Activated CD4-positive, alpha-beta T cell treated with anti-CD3 and anti-CD28 coated beads for 36 hours (primary cell): ENCODE measurements at regions of chr3 and their contacts with region 1.

Region 1: GRCh38 chr3:142963516-142964448 is at the start of gene PAQR9:
- DNase-seq: peak; percentile 48
- ATAC-seq: peak; percentile 55
- H3K4me3 Mint-ChIP-seq: peak within 1 kb of the TSS; percentile 67
- H3K27ac Mint-ChIP-seq: no peak within 1 kb of the TSS
- H3K4me1 Mint-ChIP-seq: peaks cover 7% of the 10 kb centered on the region
- H3K27me3 Mint-ChIP-seq: peaks cover 49% of the 10 kb centered on the region
- total RNA-seq, gene PAQR9: not detected

Region 2: DNA sequence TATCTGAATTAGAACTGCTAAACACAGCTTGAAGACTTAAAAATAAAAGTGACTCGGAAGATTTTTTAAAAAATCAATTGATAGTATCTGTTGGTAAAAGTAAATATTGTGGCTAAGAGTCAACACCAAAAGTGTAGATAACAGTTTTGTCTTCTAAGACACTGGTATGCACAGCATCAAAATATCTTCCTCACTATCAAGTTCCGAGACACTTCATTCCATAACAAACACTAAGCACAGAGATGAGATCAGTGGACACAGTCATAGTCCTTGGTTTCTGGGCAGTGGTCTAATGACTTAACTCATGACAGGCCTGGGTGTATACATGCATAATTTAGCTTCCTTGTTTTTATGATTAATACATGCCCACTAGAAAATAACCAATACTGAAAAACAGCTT is 1668.9 kb before region 1 on chr3:
- CTCF ChIA-PET with region 1: no interaction called
- POLR2A ChIA-PET with region 1: no interaction called
- intact Hi-C with region 1: no loop called
- DNase-seq: no peak
- ATAC-seq: peak; percentile 97
- H3K4me3 Mint-ChIP-seq: peak overlapping the region; percentile 52
- H3K27ac Mint-ChIP-seq: peak overlapping the region; percentile 74
- H3K4me1 Mint-ChIP-seq: peaks cover 16% of the 10 kb centered on the region
- H3K27me3 Mint-ChIP-seq: no peaks in the 10 kb centered on the region

Region 3: GRCh38 chr3:142787719-142788118 is 176.1 kb before region 1 on chr3:
- CTCF ChIA-PET with region 1: no interaction called
- POLR2A ChIA-PET with region 1: no interaction called
- intact Hi-C with region 1: no loop called
- DNase-seq: no peak
- ATAC-seq: no peak
- H3K4me3 Mint-ChIP-seq: no peak overlapping the region
- H3K27ac Mint-ChIP-seq: no peak overlapping the region
- H3K4me1 Mint-ChIP-seq: no peaks in the 10 kb centered on the region
- H3K27me3 Mint-ChIP-seq: no peaks in the 10 kb centered on the region

Region 4: DNA sequence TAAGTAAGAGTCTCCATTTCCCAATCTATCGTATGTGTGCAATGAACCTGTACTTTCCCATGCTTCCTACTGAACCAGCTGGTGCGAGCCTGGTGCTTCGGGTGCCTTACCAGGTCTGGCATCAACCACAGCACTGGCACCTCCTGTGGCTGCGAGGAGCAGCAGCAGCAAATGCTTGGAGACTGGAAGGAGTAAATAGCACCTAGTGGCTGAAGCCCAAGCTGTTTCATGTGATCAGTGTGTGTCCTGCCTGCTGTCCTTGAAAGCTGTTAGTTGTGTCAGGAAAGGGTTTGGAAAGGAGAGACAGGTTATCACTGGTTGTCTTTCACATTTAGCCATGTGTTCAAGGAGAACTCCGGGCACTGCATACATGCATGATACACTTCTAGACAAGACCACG is 106.7 kb before region 1 on chr3:
- CTCF ChIA-PET with region 1: no interaction called
- POLR2A ChIA-PET with region 1: no interaction called
- intact Hi-C with region 1: no loop called
- DNase-seq: no peak
- ATAC-seq: no peak
- H3K4me3 Mint-ChIP-seq: no peak overlapping the region
- H3K27ac Mint-ChIP-seq: no peak overlapping the region
- H3K4me1 Mint-ChIP-seq: no peaks in the 10 kb centered on the region
- H3K27me3 Mint-ChIP-seq: peaks cover 15% of the 10 kb centered on the region

Region 5: DNA sequence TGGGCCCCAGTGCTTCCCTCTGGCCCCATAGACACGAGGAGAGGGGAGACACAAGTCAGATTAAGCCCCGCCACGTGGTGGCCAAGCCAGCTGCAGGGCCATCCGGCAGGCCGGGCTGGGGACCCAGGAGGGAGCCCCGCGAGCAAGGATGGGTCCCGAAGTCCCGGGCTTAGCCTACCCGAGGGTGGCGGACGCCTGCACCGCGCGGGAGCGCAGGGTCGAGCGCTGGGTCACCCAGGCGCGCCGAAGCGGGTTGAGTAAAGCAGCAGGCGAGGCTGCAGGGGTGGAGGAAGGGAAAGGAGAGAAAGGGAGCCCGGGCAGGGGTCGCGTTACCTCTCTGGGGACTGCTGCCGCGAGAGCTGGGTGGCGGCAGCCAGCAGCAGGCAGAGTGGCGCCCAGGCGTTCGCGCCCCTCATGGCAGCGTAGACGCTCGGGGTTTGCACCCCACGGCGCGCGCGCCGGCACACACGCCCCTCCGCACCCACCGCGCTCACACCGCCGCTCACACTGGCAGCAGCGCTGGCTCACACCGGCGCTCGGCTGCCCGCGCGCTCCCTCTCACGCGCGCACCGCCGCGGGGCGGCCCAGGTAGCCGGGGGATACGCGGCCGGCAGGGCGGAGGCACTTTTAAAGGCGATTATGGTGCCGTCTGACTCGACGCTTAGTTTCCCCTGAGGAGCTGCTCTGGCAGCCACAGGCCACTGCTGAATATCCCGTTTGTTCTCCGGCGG is 75.1 kb before region 1 on chr3 and contains the start of gene PCOLCE2:
- CTCF ChIA-PET with region 1: no interaction called
- POLR2A ChIA-PET with region 1: no interaction called
- intact Hi-C with region 1: loop called in 1 of 2 experiments (anchors 2 kb)
- DNase-seq: peak; percentile 41
- ATAC-seq: peak; percentile 78
- H3K4me3 Mint-ChIP-seq: peak within 1 kb of the TSS; percentile 57
- H3K27ac Mint-ChIP-seq: no peak within 1 kb of the TSS
- H3K4me1 Mint-ChIP-seq: peaks cover 7% of the 10 kb centered on the region
- H3K27me3 Mint-ChIP-seq: peaks cover 40% of the 10 kb centered on the region
- total RNA-seq, gene PCOLCE2: 0.39 to 0.55 TPM

Region 6: DNA sequence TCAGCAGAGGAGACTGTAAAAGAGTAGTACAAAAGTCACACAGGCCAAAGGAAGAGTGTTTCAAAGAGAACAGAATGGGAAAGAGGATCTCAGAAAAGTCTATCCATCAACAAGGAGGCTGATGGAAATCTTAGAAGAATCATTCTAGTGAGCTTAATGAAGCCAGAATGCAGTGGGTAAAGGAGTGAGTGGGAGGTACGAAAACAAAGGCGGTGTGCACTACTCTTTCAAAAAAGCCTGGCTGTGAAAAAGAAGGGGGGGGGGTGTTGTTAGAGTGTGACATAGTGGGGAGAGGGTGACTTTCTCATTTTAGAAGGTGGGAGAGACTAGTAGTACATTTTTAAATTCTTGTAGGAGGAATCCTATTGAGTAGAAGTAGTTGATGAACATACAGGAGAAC is 12.0 kb before region 1 on chr3:
- CTCF ChIA-PET with region 1: interaction called, 7 read pairs
- POLR2A ChIA-PET with region 1: interaction called, 10 read pairs
- intact Hi-C with region 1: no loop called
- DNase-seq: no peak
- ATAC-seq: no peak
- H3K4me3 Mint-ChIP-seq: no peak overlapping the region
- H3K27ac Mint-ChIP-seq: no peak overlapping the region
- H3K4me1 Mint-ChIP-seq: peaks cover 8% of the 10 kb centered on the region
- H3K27me3 Mint-ChIP-seq: peaks cover 31% of the 10 kb centered on the region

Region 7: DNA sequence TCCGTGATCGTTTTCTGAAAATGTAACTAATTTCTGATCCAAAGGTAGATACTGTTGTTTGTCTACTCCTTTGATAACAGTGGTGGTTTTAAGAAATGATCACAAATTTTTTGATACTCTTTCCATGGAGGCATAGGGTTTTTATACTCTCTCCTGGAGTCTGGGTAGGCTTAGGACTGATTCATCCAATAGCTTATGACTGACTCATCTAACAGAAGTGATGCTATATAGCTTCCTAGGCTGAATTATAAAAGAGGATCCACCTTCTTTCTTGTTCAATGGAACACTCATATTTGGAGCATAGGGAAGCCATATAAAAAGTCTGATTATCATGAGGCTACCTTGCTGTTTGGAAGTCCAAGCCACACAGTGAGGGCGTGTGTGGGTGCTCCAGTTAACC is 240.1 kb after region 1 on chr3:
- CTCF ChIA-PET with region 1: no interaction called
- POLR2A ChIA-PET with region 1: no interaction called
- intact Hi-C with region 1: no loop called
- DNase-seq: no peak
- ATAC-seq: no peak
- H3K4me3 Mint-ChIP-seq: no peak overlapping the region
- H3K27ac Mint-ChIP-seq: no peak overlapping the region
- H3K4me1 Mint-ChIP-seq: no peaks in the 10 kb centered on the region
- H3K27me3 Mint-ChIP-seq: no peaks in the 10 kb centered on the region